ENCODE measurements at regions of chr20 and their contacts with region 1.

Region 1: DNA sequence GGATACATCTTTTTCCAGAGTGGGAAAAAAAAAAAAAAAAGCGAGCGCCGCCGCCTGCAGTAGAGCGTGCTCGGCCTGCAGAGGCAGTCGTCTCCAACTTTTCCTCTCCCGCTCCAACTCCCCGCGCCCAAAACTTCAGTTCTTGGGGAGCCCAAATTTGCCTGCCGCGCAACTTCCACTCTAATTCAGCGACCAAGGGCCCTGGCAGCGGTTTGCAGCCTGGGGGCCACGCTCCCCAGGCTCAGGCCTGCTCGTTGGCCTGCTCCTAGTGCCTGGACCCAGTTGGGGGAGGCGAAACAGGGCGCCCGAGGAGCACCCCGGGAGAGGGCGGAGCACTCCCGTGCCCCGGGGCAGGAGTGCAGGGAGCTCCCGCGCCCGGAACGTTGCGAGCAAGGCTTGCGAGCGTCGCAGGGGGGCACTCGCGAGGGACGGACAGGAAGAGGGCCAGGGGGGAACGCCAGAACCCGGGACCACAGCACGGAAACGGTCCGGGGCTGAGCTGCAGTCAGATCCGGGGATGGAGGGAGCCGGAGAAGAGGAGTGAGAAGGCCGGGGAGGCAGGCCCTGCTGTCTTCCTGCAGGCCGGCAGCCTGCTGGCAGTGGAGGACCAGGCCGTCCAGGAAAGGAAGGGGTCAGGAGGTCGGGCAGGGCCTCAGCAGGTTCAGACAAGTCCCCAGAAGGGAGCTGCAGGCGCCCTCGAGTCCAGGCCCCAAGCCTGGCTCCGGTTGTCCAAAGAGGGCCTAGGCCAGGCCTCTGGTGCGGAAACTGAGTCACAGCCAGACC is at the start of gene STX16:
- DNase-seq: peak; percentile 93
- H3K4me3 Mint-ChIP-seq: peak within 1 kb of the TSS; percentile 99
- H3K27ac Mint-ChIP-seq: peak within 1 kb of the TSS; percentile 100
- H3K4me1 Mint-ChIP-seq: peaks cover 17% of the 10 kb centered on the region
- H3K27me3 Mint-ChIP-seq: no peaks in the 10 kb centered on the region
- total RNA-seq, gene STX16: 88.7 to 104 TPM

Region 2: DNA sequence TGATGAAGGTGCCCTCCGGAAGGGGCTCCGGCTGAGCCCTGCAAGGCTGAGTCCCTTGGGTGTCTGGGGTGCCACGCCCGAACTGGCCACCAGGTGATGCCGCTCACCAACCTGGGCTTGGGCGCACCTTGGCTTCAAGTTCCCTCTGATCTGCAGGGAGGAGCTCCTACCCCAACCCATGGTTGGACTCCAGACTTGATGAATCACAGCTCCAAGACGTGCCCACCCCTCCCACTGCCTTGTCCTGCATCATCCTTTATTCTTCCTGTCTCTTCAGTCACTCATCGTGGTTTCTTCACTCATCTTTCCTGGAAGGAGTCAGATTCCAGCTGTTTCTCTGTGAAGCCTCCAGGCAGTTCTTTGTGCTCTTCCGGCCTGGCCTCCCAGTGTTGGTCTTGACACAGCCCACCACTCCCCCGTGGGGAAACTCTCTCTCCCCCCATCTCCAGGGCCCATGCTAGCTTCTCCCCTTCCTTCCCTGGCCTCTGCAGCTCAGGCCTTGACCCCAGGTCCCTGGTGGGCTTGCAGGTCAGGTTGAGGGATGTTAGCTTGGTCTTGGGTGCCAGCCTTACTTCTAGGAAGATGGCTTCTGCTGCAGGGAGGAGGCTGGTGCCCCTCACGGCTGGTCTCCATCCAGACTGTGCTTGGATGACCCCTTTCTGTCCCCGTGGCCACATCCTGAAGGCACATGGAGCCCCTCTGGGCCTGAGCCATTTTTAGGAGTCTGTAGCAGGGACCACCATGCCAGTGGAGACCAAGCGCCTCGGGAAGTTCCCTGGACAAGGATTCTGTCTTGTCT is 1028.2 kb before region 1 on chr20:
- CTCF ChIA-PET with region 1: no interaction called
- POLR2A ChIA-PET with region 1: no interaction called
- intact Hi-C with region 1: loop called (anchors 10 kb)
- DNase-seq: peak; percentile 85
- H3K4me3 Mint-ChIP-seq: no peak overlapping the region
- H3K27ac Mint-ChIP-seq: peak overlapping the region; percentile 53
- H3K4me1 Mint-ChIP-seq: peaks cover 64% of the 10 kb centered on the region
- H3K27me3 Mint-ChIP-seq: peaks cover 2% of the 10 kb centered on the region

Region 3: GRCh38 chr20:58388882-58389323 is 262.1 kb before region 1 on chr20 and contains the start of gene VAPB:
- CTCF ChIA-PET with region 1: interaction called, 4 read pairs
- POLR2A ChIA-PET with region 1: interaction called, 8 read pairs
- intact Hi-C with region 1: loop called (anchors 5 kb)
- DNase-seq: peak; percentile 98
- H3K4me3 Mint-ChIP-seq: peak within 1 kb of the TSS; percentile 95
- H3K27ac Mint-ChIP-seq: peak within 1 kb of the TSS; percentile 92
- H3K4me1 Mint-ChIP-seq: peaks cover 38% of the 10 kb centered on the region
- H3K27me3 Mint-ChIP-seq: peaks cover 2% of the 10 kb centered on the region
- total RNA-seq, gene VAPB: 34.6 to 37.0 TPM

Region 4: DNA sequence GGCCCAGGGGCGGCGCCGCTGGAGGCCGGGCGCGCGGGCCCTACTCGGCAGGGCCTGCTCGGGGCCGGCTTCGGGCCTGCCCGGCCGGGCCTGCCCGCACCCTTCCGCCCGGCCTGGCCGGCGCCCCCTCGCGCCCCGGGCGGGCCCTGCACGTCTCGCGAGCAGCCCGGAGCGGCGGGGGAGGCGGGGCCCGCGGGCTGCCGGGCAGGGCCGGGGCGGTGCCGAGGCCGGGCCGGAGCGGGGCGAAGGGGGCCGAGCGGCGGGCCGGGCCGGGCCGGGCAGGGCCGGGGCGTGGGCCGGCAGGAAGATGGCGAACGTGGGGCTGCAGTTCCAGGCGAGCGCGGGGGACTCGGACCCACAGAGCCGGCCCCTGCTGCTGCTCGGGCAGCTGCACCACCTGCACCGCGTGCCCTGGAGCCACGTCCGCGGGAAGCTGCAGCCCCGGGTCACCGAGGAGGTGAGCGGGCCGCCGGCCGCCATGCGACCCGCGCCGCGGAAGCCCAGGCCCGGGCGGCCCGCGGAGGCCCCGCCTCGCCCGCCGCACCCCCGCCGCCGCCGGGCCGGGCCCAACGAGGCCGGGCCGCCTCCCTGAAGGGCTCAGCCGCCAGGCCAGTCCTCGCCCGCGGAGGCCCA is 41.7 kb after region 1 on chr20 and contains the start of gene NPEPL1:
- CTCF ChIA-PET with region 1: interaction called, 15 read pairs
- POLR2A ChIA-PET with region 1: interaction called, 21 read pairs
- intact Hi-C with region 1: loop called (anchors 1 kb)
- DNase-seq: peak; percentile 71
- H3K4me3 Mint-ChIP-seq: peak within 1 kb of the TSS; percentile 67
- H3K27ac Mint-ChIP-seq: peak within 1 kb of the TSS; percentile 57
- H3K4me1 Mint-ChIP-seq: peaks cover 16% of the 10 kb centered on the region
- H3K27me3 Mint-ChIP-seq: no peaks in the 10 kb centered on the region
- total RNA-seq, gene NPEPL1: 17.8 to 18.8 TPM

Region 5: DNA sequence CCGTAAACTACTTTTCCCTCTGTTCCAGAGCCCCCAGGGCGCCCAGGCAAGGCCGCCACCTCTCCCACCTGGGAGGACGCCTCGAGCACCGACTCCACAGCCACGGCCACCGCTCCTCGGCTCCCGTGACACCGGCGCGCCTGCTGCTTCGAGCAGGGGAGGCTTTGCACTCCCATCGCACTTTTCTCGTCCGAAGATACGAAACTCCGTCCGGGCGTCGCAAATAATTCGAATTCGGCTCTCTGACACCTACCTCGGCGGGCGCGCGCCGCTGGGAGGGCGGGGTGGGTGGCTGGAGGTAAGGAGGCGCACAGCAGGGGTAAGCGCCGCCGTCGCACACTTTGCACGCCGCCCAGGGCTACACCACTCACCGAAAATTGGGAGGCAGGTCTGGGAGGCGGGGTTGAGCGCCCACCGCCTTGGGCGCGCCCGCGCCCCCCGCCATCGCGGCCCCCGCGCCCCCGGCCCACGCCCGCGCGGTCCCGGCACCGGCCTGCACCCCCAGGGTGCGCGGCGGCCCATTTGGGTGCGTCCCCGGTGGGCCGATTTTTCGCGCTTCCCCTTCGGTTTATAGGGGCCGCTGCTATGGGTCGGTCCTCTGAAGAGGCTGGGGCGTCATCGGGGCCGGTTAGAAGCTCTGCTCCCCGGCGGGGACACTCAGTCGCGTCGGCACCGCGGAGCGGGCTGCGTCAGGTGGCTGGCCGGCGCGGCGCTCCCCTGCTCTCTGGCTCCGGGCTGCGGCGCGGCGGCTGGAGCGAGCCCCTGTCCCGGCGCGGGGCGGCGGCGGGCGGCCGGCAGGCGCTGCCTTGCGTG is 237.8 kb after region 1 on chr20:
- CTCF ChIA-PET with region 1: interaction called, 4 read pairs
- POLR2A ChIA-PET with region 1: interaction called, 6 read pairs
- intact Hi-C with region 1: loop called (anchors 1 kb)
- DNase-seq: peak; percentile 88
- H3K4me3 Mint-ChIP-seq: peak overlapping the region; percentile 80
- H3K27ac Mint-ChIP-seq: peak overlapping the region; percentile 58
- H3K4me1 Mint-ChIP-seq: peaks cover 27% of the 10 kb centered on the region
- H3K27me3 Mint-ChIP-seq: no peaks in the 10 kb centered on the region

Region 6: GRCh38 chr20:59165891-59166709 is 515.1 kb after region 1 on chr20:
- CTCF ChIA-PET with region 1: no interaction called
- POLR2A ChIA-PET with region 1: no interaction called
- intact Hi-C with region 1: loop called (anchors 5 kb)
- DNase-seq: peak; percentile 65
- H3K4me3 Mint-ChIP-seq: peak overlapping the region; percentile 77
- H3K27ac Mint-ChIP-seq: peak overlapping the region; percentile 96
- H3K4me1 Mint-ChIP-seq: peaks cover 77% of the 10 kb centered on the region
- H3K27me3 Mint-ChIP-seq: no peaks in the 10 kb centered on the region

Measured in activated CD4-positive, alpha-beta memory T cell treated with anti-CD3 and anti-CD28 coated beads for 36 hours (primary cell).